Endothelial cell of umbilical vein (primary cell): ENCODE measurements at regions of chr1 and their contacts with region 1.

Region 1: GRCh38 chr1:56578963-56579875 is at the start of gene PLPP3:
- DNase-seq: peak; percentile 94
- H3K4me3 ChIP-seq: peak within 1 kb of the TSS; percentile 42 to 99 (median 66)
- H3K27ac ChIP-seq: peak within 1 kb of the TSS; percentile 75
- H3K4me1 ChIP-seq: peaks cover 36% of the 10 kb centered on the region
- H3K27me3 ChIP-seq: no peaks in the 10 kb centered on the region
- CTCF ChIP-seq: peak; percentile 34 to 37
- POLR2A ChIP-seq: peak; percentile 93
- total RNA-seq, gene PLPP3: 7.2 and 14.1 TPM in 2 replicates

Region 2: DNA sequence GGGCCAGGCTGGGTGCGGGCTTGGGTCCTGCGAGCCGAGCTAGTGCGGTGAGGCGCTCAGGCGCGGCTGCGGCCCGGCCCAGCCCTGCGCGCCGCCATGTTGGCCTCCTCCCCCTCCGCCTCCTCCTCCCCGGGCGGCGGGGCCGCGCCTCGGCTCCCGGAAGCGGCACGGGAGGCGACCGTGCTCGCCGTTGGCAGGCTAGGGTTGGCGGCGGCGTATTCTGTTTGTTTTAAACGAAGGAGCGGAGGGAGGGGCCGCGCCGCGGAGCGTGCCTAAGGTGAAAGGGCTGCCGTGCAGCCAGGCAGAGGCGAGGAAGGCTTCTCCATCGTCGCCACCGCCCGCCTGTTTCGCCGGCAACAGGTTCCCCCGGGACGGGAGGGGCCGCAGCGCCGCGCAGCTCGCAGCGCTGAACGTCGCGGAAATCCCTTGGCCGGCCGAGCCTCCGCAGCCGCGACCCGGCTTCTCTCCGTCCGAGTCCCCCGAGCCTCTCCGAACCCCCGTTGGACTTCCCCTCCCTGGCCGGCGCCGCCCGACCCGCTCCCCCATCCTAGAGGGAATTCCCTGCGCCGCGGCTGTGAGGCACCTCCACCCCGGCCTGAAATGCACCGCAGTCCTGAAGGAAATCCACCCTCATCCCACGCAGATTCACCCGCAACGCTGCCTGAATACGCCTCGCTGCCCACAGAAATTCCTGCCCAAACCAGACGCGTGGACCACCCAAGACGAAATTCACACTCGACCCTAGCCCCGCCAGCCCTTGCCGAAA is 1363.8 kb before region 1 on chr1 and contains the start of gene USP24:
- CTCF ChIA-PET with region 1: no interaction called
- POLR2A ChIA-PET with region 1: no interaction called
- dilution Hi-C with region 1: no loop called
- intact Hi-C with region 1: loop called (anchors 2 kb)
- DNase-seq: peak; percentile 69
- H3K4me3 ChIP-seq: peak within 1 kb of the TSS; percentile 46 to 79 (median 49)
- H3K27ac ChIP-seq: peak within 1 kb of the TSS; percentile 34
- H3K4me1 ChIP-seq: peaks cover 17% of the 10 kb centered on the region
- H3K27me3 ChIP-seq: no peaks in the 10 kb centered on the region
- CTCF ChIP-seq: no peak
- POLR2A ChIP-seq: peak; percentile 72
- total RNA-seq, gene USP24: 30.0 and 32.6 TPM in 2 replicates

Region 3: DNA sequence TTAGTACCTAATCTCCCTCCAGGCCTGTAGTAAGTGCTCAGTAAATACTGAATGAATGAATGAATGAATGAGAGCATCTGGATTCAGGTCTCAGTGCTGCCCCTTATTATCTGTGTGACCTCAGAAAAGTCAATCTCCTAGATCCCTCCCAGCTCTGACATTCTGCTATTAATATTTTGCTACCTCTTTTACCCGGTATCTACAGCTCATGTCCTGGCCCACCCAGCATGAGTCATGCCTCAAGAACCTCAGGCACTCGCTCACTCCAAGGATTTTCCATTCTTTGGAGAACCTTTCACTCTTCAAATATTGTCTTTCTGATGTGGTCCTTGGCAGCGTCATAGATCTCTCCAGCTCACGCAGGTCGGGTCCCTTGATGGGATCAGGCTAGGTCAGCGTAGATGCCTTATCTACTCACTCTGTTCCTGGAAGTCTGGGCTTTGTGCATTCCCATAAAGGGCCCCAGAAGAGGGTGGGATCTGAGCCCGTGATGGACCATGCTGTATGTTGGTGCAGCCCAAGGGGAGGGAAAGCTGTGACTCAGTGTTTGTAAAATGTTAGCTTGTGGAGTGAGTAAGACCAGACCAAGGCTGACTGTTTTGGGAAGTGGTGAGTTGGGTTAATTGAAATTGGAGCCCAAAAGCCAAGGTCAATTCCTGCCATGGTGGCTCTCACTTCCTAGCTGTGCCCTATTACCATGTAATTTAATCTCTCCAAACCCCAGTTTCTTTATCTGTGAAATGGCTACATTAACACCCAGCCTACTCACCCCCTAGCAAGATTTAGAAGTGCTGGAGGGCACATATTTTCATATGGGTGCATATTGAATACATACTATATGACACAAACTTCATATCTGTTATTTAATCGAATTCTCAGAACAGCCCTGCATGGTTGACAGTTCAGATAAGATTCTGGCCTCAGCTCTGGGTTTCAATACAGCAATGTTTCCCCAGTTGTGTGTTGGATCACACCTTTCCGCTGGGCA is 1150.0 kb before region 1 on chr1:
- CTCF ChIA-PET with region 1: interaction called, 6 read pairs
- POLR2A ChIA-PET with region 1: interaction called, 4 read pairs
- dilution Hi-C with region 1: no loop called
- intact Hi-C with region 1: loop called (anchors 1 kb)
- DNase-seq: peak; percentile 99
- H3K4me3 ChIP-seq: no peak overlapping the region
- H3K27ac ChIP-seq: peak overlapping the region; percentile 93
- H3K4me1 ChIP-seq: peaks cover 32% of the 10 kb centered on the region
- H3K27me3 ChIP-seq: no peaks in the 10 kb centered on the region
- CTCF ChIP-seq: no peak
- POLR2A ChIP-seq: peak; percentile 54

Region 4: GRCh38 chr1:56068908-56069307 is 510.3 kb before region 1 on chr1:
- CTCF ChIA-PET with region 1: interaction called, 3 read pairs
- POLR2A ChIA-PET with region 1: no interaction called
- dilution Hi-C with region 1: no loop called
- intact Hi-C with region 1: loop called (anchors 2 kb)
- DNase-seq: peak; percentile 76
- H3K4me3 ChIP-seq: no peak overlapping the region
- H3K27ac ChIP-seq: peak overlapping the region; percentile 54
- H3K4me1 ChIP-seq: peaks cover 41% of the 10 kb centered on the region
- H3K27me3 ChIP-seq: no peaks in the 10 kb centered on the region
- CTCF ChIP-seq: no peak
- POLR2A ChIP-seq: no peak

Region 5: DNA sequence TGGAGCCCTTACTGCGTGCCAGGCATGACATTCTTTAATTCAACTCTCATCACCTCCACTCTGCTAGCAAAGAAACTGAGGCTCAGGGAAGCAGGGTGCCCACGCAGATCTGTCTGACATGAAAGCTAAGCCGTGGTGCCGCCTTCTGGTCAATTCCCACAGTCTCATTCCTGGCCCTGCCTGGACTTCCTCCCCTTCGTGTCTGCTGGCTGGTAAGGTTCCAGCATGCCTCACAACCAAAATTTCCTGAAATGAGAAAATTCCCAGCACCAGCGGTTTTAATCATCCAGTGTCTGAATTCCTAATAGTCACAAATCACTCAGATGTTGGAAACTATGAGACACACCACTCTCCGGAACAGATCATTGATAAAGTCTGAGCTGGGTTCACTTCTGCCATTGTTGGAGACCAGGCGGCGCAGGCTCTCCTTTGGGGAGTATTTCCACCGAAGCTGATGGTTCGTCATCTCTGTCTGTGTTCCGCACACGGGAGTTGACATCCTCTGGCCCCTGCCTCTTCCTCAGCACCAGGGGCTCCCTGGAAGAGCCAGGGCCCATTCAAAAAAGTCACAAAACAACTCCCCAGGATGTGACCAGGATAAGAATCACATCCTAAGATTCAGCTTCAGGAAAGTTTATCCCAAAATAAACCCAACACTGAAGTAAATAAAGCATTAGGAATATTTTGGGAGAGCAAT is 167.6 kb before region 1 on chr1:
- CTCF ChIA-PET with region 1: interaction called, 19 read pairs
- POLR2A ChIA-PET with region 1: no interaction called
- dilution Hi-C with region 1: no loop called
- intact Hi-C with region 1: loop called (anchors 1 kb)
- DNase-seq: peak; percentile 95
- H3K4me3 ChIP-seq: no peak overlapping the region
- H3K27ac ChIP-seq: peak overlapping the region; percentile 49
- H3K4me1 ChIP-seq: peaks cover 19% of the 10 kb centered on the region
- H3K27me3 ChIP-seq: no peaks in the 10 kb centered on the region
- CTCF ChIP-seq: peak; percentile 38 to 60
- POLR2A ChIP-seq: no peak

Region 6: DNA sequence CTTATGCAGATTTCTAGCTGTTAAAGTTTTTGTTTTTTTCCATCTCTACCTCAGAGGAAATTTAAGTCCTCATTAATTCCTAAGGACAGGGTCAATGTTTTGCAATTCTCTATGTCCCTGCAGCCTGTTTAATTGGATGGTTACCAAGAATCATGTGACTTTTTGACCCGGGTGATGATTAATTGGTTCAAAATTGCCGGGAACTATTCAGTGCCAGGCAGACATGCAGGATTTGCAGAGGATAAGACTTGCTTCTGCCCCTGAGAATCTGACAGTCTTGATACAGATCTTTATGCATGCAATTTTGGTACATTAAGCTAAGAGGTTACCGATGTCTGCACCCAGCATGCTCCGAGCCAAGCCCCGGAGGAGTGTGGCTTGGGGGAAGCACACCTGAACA is 87.8 kb before region 1 on chr1:
- CTCF ChIA-PET with region 1: interaction called, 4 read pairs
- POLR2A ChIA-PET with region 1: no interaction called
- dilution Hi-C with region 1: no loop called
- intact Hi-C with region 1: loop called (anchors 2 kb)
- DNase-seq: peak; percentile 88
- H3K4me3 ChIP-seq: no peak overlapping the region
- H3K27ac ChIP-seq: no peak overlapping the region
- H3K4me1 ChIP-seq: peaks cover 24% of the 10 kb centered on the region
- H3K27me3 ChIP-seq: no peaks in the 10 kb centered on the region
- CTCF ChIP-seq: no peak
- POLR2A ChIP-seq: no peak

Region 7: DNA sequence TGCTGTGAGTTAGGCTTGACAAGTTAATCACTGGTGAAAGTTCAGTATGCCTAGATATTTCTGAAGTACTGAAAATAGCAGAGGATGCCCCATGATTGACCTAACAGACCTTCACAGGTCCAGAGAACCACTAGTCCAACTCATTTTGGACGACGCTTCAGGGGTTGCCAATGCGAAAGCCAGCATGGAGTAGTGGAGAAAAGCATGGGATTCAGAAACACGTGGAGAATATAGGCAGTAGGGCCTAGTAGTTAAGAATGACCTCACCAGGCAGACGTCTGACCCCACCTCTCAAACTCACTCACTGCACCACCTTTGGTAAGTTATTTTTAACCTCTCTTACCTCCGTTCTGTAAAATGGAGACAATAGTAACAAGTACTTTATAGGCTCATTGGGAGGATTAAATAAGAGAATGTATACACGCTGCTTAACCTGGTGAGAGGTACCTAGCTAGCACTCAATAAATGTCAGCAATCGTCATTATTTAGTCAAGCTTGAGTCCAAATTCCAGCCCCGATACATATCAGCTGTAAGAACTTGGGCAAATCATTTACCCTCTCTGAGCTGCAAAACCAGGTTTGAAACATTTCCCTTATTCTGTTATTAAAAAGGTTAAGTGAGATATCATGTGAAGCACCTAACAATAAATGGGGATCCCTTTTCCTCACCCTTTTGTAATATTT is 13.0 kb before region 1 on chr1:
- CTCF ChIA-PET with region 1: interaction called, 18 read pairs
- POLR2A ChIA-PET with region 1: no interaction called
- dilution Hi-C with region 1: no loop called
- intact Hi-C with region 1: no loop called
- DNase-seq: no peak
- H3K4me3 ChIP-seq: no peak overlapping the region
- H3K27ac ChIP-seq: no peak overlapping the region
- H3K4me1 ChIP-seq: peaks cover 3% of the 10 kb centered on the region
- H3K27me3 ChIP-seq: no peaks in the 10 kb centered on the region
- CTCF ChIP-seq: no peak
- POLR2A ChIP-seq: no peak

Region 8: DNA sequence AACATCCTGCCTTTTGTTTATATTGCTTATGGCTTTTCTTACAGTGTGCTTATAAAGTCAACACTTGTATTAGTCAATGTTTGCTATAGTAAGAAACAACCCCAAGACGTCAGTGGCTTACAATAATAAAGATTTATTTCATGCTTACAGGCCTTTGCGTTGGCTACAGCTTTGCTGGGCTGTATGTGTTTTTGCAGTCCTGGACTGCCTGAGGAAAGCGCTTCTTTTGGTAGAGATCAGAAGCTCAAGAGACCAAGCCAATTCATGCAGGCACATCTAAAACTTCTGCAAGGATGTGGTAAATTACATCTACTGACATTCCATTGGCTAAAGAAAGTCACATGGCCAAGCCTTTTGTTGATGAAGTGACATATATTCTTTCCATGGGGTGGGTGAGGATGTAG is 48.4 kb after region 1 on chr1:
- CTCF ChIA-PET with region 1: no interaction called
- POLR2A ChIA-PET with region 1: no interaction called
- dilution Hi-C with region 1: no loop called
- intact Hi-C with region 1: no loop called
- DNase-seq: peak; percentile 7
- H3K4me3 ChIP-seq: no peak overlapping the region
- H3K27ac ChIP-seq: no peak overlapping the region
- H3K4me1 ChIP-seq: no peaks in the 10 kb centered on the region
- H3K27me3 ChIP-seq: no peaks in the 10 kb centered on the region
- CTCF ChIP-seq: no peak
- POLR2A ChIP-seq: no peak

Region 9: DNA sequence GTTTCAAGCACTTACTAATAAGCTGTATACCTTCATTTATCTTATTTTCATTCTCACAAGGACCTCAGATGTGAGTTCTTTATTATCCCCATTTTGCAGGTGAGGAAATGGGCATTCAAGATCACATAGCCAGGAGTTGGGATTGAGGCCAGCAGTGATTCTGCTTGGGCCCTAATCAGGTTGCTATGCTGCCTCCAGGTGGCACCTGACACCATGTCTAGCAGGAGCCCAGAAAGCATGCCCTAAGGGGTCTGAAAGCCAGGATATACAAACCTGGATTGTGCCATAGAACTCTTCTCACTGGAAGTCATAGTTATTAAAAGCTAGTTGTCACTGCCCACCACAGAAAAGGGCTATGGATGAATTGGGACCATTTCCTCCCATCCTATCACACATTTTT is 178.9 kb after region 1 on chr1:
- CTCF ChIA-PET with region 1: no interaction called
- POLR2A ChIA-PET with region 1: no interaction called
- dilution Hi-C with region 1: no loop called
- intact Hi-C with region 1: no loop called
- DNase-seq: no peak
- H3K4me3 ChIP-seq: no peak overlapping the region
- H3K27ac ChIP-seq: no peak overlapping the region
- H3K4me1 ChIP-seq: no peaks in the 10 kb centered on the region
- H3K27me3 ChIP-seq: no peaks in the 10 kb centered on the region
- CTCF ChIP-seq: no peak
- POLR2A ChIP-seq: no peak